ENCODE measurements at regions of chrX and their contacts with region 1.

Region 1: DNA sequence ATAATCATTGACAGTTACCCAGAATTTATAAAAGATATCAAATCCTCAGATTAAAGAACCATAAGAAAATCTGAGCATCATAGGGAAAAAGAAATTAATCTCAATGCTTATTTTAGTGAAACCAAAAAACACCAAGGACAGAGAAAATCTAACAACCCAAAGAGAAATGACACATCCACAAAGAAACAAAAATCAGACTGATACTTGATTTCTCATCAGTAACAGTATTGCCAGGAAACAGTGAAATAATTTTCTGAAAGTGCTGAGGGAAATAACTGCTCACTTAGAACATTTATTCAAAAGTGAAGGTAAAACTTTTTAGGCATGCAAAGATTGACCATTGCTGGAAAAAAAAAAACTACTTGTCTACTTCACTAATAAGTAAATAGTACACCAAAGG is 10.6 kb downstream of the MOSPD2 start:
- DNase-seq: no peak
- ATAC-seq: no peak
- H3K4me3 Mint-ChIP-seq: no peak overlapping the region
- H3K27ac Mint-ChIP-seq: no peak overlapping the region
- H3K4me1 Mint-ChIP-seq: peaks cover 8% of the 10 kb centered on the region
- H3K27me3 Mint-ChIP-seq: no peaks in the 10 kb centered on the region
- CTCF ChIP-seq: no peak

Region 2: GRCh38 chrX:14899607-14900006 is 15.8 kb after region 1 on chrX:
- CTCF ChIA-PET with region 1: no interaction called
- POLR2A ChIA-PET with region 1: interaction called, 8 read pairs
- intact Hi-C with region 1: loop called (anchors 2 kb)
- DNase-seq: no peak
- ATAC-seq: peak; percentile 82
- H3K4me3 Mint-ChIP-seq: no peak overlapping the region
- H3K27ac Mint-ChIP-seq: no peak overlapping the region
- H3K4me1 Mint-ChIP-seq: peaks cover 10% of the 10 kb centered on the region
- H3K27me3 Mint-ChIP-seq: no peaks in the 10 kb centered on the region
- CTCF ChIP-seq: no peak

Region 3: DNA sequence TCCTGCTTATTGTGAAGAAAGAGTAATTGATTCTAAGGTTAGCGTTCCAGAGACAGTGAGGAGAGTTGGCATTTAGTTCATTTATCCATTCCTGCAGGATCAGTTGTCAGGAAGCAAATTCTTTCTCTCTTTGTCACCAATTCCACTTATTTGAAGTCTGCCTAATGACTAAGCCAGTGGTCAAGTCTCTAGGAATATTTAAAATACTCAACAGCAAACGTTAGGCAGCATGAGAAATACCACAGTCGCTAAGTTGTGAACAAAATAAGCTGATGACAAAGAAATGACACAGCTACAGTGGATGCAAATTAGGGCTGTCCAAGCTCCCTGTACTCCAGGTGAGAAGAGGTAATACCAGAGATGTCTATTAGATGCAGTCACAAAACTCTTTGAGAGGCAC is 1276.9 kb after region 1 on chrX:
- CTCF ChIA-PET with region 1: no interaction called
- POLR2A ChIA-PET with region 1: no interaction called
- intact Hi-C with region 1: no loop called
- DNase-seq: no peak
- ATAC-seq: no peak
- H3K4me3 Mint-ChIP-seq: no peak overlapping the region
- H3K27ac Mint-ChIP-seq: no peak overlapping the region
- H3K4me1 Mint-ChIP-seq: no peaks in the 10 kb centered on the region
- H3K27me3 Mint-ChIP-seq: no peaks in the 10 kb centered on the region
- CTCF ChIP-seq: no peak